Heart right ventricle (tissue), 16 donors: ENCODE measurements at regions of chr11 and their contacts with region 1.

Region 1: DNA sequence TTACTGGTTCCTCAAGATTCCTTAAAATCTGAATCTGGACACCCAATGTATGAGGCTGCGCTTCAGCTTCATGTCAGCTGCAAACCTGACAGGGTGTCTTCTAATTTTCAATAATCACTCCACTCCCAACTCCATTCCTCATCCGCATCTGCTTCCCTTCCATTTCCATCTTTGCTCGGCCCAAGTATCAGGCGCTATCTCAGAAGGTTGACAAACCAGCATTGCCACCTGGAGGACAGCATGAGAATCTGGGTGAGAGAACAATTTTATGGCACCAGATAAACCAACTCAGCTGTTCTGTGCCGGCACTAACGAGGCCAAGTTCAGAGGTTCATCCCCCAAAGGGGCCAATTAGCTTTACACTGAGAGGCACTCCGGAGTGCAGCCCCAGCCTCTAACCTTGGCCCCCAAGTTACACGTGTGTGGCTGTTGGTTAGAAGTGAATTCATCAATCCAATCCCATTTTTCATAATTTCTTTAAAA is 79.1 kb upstream of the LMO2 start:
- DNase-seq: peak in 1 of 2 donors; percentile 59
- ATAC-seq: peak; percentile 59 to 92 (median 89)
- H3K4me3 ChIP-seq: no peak overlapping the region
- H3K27ac ChIP-seq: no peak overlapping the region
- H3K4me1 ChIP-seq: peaks cover 0 to 4% (median 0%) of the 10 kb centered on the region in 9 donors
- H3K27me3 ChIP-seq: peaks cover 0 to 7% (median 0%) of the 10 kb centered on the region in 7 donors
- CTCF ChIP-seq: peak; percentile 32 to 79 (median 74)

Region 2: DNA sequence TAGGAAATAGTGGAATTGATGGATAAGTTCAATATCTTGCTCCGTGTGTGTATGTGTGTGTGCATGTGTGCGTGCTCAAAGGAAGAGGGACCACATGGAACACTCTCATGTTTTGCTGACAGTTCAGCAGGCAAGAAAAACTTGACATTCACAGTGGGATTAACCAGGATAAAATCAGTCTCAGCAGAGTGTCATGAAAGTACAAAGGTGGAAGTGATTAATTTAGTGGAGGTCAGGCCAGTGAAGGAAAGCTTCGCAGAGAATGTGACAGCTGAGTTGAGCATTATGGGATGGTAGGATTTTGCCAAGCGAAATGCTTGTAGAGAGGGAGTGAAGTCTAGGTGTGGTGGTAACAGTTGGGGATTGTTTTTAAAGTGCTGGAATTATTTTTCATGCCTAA is 181.0 kb before region 1 on chr11:
- intact Hi-C with region 1: no loop called
- DNase-seq: no peak
- ATAC-seq: no peak
- H3K4me3 ChIP-seq: no peak overlapping the region
- H3K27ac ChIP-seq: no peak overlapping the region
- H3K4me1 ChIP-seq: no peaks in the 10 kb centered on the region
- H3K27me3 ChIP-seq: peaks cover 0 to 48% (median 9%) of the 10 kb centered on the region in 7 donors
- CTCF ChIP-seq: no peak

Region 3: DNA sequence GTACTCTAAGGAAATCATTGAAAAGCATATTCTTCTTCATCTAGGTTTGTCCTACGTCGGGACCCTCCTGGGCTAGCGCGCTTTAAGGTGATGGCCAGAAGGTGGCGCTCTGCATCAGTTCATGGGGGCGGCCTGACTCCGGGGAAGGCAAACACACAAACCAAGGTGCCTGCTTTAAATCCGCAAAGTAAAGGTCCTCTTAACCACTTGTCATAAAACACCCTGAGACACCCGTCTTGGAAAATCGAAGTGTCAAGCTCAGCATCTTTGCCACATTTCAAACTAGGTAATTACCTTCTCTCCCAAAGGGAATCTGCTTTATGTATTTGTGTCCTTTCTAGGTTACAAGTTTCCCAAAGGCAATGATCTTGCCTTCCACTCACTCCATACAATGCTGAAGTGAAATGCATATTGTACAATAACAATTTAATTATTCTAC is 113.1 kb before region 1 on chr11:
- intact Hi-C with region 1: loop called (anchors 1 to 5 kb)
- DNase-seq: peak; percentile 80 to 81
- ATAC-seq: peak; percentile 79 to 95 (median 94)
- H3K4me3 ChIP-seq: no peak overlapping the region
- H3K27ac ChIP-seq: no peak overlapping the region
- H3K4me1 ChIP-seq: peaks cover 0 to 20% (median 0%) of the 10 kb centered on the region in 9 donors
- H3K27me3 ChIP-seq: peaks cover 0 to 10% (median 0%) of the 10 kb centered on the region in 7 donors
- CTCF ChIP-seq: peak; percentile 87 to 98 (median 94)

Region 4: DNA sequence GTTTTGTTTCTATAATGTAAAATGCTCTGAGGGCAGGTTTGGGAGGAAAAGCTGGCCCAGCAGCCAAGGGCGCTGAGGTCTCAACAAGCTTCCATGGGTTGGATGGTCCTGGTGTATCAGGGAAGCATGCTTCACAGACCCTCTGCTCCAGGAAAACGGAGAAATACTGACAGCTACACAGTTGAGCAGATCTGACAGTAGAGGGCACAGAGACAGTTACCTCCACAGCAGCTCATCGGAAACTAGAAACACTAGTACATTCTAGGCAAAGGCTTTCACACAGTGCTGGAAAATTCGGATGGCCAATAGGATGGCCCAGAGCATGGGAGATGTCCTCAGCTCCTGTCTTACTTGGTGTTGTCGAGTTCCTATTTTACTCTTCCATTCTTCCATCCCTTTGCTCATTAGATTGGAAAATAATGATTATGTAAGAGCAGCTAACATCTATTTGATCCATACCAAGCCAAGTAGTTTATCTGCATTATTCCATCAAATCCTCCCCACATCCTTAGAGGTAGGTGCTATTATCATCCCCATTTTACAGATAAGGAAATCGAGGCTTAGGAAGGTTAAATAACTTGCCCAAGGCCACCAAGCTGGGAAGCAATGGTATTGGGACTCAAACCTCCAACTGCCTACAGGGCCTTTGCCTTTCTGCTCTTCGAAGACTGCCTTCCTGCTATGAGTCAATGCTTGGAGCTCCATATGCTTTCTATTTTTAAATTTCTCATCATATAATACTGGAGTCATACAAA is 107.4 kb before region 1 on chr11:
- intact Hi-C with region 1: loop called in 7 of 10 experiments (anchors 1 to 5 kb)
- DNase-seq: no peak
- ATAC-seq: no peak
- H3K4me3 ChIP-seq: no peak overlapping the region
- H3K27ac ChIP-seq: no peak overlapping the region
- H3K4me1 ChIP-seq: peaks cover 0 to 55% (median 7%) of the 10 kb centered on the region in 9 donors
- H3K27me3 ChIP-seq: peaks cover 0 to 11% (median 0%) of the 10 kb centered on the region in 7 donors
- CTCF ChIP-seq: no peak